ENCODE measurements at regions of chr7 and their contacts with region 1.

Region 1: GRCh38 chr7:151244196-151244840 is 4.2 kb downstream of the SMARCD3 start:
- DNase-seq: peak in 1 of 2 donors; percentile 54
- ATAC-seq: no peak
- H3K4me3 ChIP-seq: peak overlapping the region in 2 of 4 donors; percentile 26 to 44
- H3K27ac ChIP-seq: peak overlapping the region in 3 of 4 donors; percentile 92 to 99 (median 96)
- H3K4me1 ChIP-seq: peaks cover 47 to 50% of the 10 kb centered on the region in 2 donors
- H3K27me3 ChIP-seq: no peaks in the 10 kb centered on the region
- CTCF ChIP-seq: peak; percentile 75 to 92 (median 80)
- POLR2A ChIP-seq: no peak

Region 2: GRCh38 chr7:150368096-150368883 is 876.0 kb before region 1 on chr7 and contains the start of gene REPIN1:
- in situ Hi-C with region 1: no loop called
- intact Hi-C with region 1: loop called (anchors 10 kb)
- DNase-seq: peak; percentile 90 to 94
- ATAC-seq: peak; percentile 75 to 85
- H3K4me3 ChIP-seq: peak within 1 kb of the TSS; percentile 74 to 87 (median 84)
- H3K27ac ChIP-seq: peak within 1 kb of the TSS; percentile 98 to 100 (median 100)
- H3K4me1 ChIP-seq: peaks cover 33 to 40% of the 10 kb centered on the region in 2 donors
- H3K27me3 ChIP-seq: no peaks in the 10 kb centered on the region
- CTCF ChIP-seq: peak in 1 of 5 experiments; percentile 22
- POLR2A ChIP-seq: peak; percentile 89 to 91
- total RNA-seq, gene REPIN1: 115 to 332 (median 159) TPM

Region 3: DNA sequence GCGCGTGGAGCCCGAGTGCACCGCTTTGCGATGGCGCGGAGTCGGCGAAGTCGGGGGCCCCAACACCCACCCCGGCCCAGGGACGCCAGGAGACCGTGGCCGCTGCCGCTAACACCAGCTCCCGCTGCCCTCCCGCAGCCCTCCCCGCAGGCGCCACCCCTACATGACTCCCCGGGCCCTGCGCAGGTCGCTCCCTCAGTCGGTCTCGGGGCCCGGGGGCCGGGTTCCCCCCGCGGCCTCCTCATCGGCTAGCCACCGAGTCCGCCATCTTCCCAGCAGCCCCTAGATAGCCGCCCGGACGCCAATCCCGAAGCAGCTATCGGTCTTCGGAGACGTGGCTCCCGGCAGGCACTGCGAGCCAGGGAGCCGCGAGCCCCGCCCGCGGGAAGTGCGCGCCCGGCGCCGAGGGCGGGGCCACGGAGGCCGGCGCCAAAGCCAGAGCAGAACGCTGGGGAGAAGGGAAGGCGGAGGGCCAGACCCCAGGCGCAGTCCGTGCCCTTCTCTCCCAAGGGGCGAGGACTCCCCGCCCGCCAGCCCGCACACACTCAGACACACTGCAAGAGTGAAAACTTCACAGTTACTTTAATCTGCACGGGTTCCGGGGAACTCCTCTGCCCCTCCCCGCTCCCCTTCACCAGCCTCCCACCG is 163.7 kb before region 1 on chr7 and contains the start of gene FASTK:
- in situ Hi-C with region 1: no loop called
- intact Hi-C with region 1: loop called (anchors 5 kb)
- DNase-seq: peak; percentile 87 to 90
- ATAC-seq: peak; percentile 77 to 85
- H3K4me3 ChIP-seq: peak within 1 kb of the TSS; percentile 96 to 99 (median 98)
- H3K27ac ChIP-seq: peak within 1 kb of the TSS; percentile 90 to 99 (median 94)
- H3K4me1 ChIP-seq: peaks cover 34 to 47% of the 10 kb centered on the region in 2 donors
- H3K27me3 ChIP-seq: no peaks in the 10 kb centered on the region
- CTCF ChIP-seq: no peak
- POLR2A ChIP-seq: peak; percentile 70 to 79
- total RNA-seq, gene FASTK: 108 to 181 (median 141) TPM

Region 4: DNA sequence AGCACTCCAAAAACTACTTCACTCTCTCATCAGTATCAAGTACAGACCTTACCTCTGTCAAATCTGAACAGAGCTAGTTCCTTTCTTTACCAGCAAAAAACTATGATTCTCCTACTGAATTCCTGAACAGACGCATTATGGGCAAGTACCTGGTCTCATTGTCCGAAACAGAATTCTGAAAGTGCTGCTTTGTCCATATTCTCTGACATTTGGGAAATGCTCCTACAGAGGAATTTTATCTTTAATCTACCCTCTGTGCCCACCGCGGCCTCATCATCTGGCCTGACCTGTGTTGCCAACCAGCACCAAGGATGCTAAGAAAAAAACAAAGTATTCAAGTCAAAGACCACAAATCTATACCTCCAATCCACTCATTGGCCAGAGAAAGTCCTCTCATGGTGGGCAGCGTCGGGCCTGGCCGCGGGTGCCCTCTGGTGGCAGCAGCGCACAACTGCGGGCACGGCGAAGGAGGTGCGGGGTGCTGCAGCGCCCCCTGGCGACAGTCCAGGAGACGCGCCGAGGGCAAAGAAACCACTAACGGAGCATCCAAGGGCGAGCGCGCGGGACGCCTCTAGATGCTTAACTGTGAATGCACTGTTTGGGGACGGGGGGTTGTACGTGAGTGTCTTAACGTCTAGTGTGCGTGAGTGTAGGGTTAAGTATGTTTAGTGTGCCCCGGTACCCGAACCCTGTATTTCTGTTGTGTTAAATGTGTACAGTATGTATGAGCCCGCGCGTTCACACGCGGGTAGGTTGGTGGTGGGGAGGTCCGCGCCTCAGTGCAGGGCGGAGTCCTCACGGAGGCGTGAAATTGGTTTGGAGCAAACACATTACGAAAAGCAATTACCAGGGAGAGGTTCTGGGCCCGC is 71.8 kb before region 1 on chr7:
- in situ Hi-C with region 1: no loop called
- intact Hi-C with region 1: loop called (anchors 2 kb)
- DNase-seq: peak; percentile 53 to 71
- ATAC-seq: peak; percentile 60 to 79
- H3K4me3 ChIP-seq: no peak overlapping the region
- H3K27ac ChIP-seq: peak overlapping the region in 1 of 4 donors; percentile 33
- H3K4me1 ChIP-seq: peaks cover 3 to 17% of the 10 kb centered on the region in 2 donors
- H3K27me3 ChIP-seq: no peaks in the 10 kb centered on the region
- CTCF ChIP-seq: peak; percentile 99 to 100 (median 100)
- POLR2A ChIP-seq: no peak

Region 5: DNA sequence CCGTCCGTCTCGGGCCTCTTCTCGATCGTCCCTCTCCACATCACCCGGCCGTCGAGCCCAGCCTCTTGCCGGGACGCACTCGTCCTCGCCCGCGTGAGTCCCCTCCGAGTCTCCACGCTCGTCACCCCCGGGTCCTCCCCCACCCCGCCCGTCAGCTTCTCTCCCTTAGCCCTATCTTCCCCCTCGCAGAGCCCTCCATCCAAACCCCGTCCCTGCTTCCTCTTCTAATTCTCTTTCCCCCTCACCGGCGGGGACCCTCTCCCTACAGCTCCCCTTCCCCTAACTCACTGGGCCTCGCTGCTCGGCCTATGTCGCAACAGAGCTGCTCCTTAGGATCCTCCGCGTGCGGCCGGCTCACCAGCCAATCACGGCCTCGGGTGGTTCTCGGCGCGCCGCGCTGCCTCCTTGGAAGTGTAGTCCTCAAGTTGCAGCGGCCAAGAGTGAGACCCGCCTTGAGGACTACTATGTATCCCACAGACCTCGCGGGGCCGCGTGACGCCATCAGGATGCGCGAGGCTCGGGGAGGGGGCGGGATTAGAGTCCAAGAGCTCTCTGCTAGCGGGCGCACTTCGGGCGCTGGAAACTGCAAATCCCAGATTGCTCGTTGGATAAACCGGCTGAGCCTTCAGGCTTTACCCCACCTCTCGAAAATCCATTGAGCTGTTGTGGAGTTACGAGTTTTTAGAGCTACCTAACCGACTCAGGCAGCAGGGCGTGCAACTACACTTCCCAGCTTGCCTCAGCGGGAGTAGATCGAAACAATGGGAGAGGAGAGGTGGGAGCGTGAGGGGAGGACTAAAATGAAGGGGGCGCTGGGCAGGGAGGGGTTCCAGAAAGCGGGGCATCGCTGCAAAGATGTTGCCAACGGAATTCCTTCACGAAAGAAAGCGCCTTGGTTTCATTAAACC is 17.2 kb before region 1 on chr7 and contains the start of gene ABCF2:
- in situ Hi-C with region 1: no loop called
- intact Hi-C with region 1: loop called (anchors 2 kb)
- DNase-seq: peak; percentile 97 to 99
- ATAC-seq: peak; percentile 97
- H3K4me3 ChIP-seq: peak within 1 kb of the TSS; percentile 70 to 90 (median 82)
- H3K27ac ChIP-seq: peak within 1 kb of the TSS; percentile 83 to 91 (median 85)
- H3K4me1 ChIP-seq: peaks cover 27 to 32% of the 10 kb centered on the region in 2 donors
- H3K27me3 ChIP-seq: no peaks in the 10 kb centered on the region
- CTCF ChIP-seq: no peak
- POLR2A ChIP-seq: peak; percentile 74 to 83
- total RNA-seq, gene ABCF2: 73.3 to 119 (median 96.3) TPM

Region 6: GRCh38 chr7:151705636-151706276 is 461.4 kb after region 1 on chr7:
- in situ Hi-C with region 1: no loop called
- intact Hi-C with region 1: loop called (anchors 5 kb)
- DNase-seq: peak; percentile 75 to 91
- ATAC-seq: peak; percentile 73 to 83
- H3K4me3 ChIP-seq: peak overlapping the region in 1 of 4 donors; percentile 11
- H3K27ac ChIP-seq: peak overlapping the region; percentile 57 to 73 (median 69)
- H3K4me1 ChIP-seq: peaks cover 29 to 33% of the 10 kb centered on the region in 2 donors
- H3K27me3 ChIP-seq: no peaks in the 10 kb centered on the region
- CTCF ChIP-seq: peak; percentile 38 to 60 (median 53)
- POLR2A ChIP-seq: peak in 1 of 2 donors; percentile 37

Region 7: GRCh38 chr7:152054367-152055230 is 810.3 kb after region 1 on chr7:
- in situ Hi-C with region 1: no loop called
- intact Hi-C with region 1: no loop called
- DNase-seq: peak in 1 of 2 donors; percentile 56
- ATAC-seq: peak; percentile 71 to 83
- H3K4me3 ChIP-seq: no peak overlapping the region
- H3K27ac ChIP-seq: peak overlapping the region in 3 of 4 donors; percentile 11 to 52 (median 17)
- H3K4me1 ChIP-seq: peaks cover 19 to 42% of the 10 kb centered on the region in 2 donors
- H3K27me3 ChIP-seq: no peaks in the 10 kb centered on the region
- CTCF ChIP-seq: no peak
- POLR2A ChIP-seq: no peak

Region 8: GRCh38 chr7:152660021-152660420 is 1415.7 kb after region 1 on chr7:
- in situ Hi-C with region 1: no loop called
- intact Hi-C with region 1: no loop called
- DNase-seq: no peak
- ATAC-seq: no peak
- H3K4me3 ChIP-seq: no peak overlapping the region
- H3K27ac ChIP-seq: no peak overlapping the region
- H3K4me1 ChIP-seq: peaks cover 9 to 10% of the 10 kb centered on the region in 2 donors
- H3K27me3 ChIP-seq: no peaks in the 10 kb centered on the region
- CTCF ChIP-seq: no peak
- POLR2A ChIP-seq: no peak